MCF 10A (cell line): ENCODE measurements at regions of chr13 and their contacts with region 1.

Region 1: GRCh38 chr13:87274209-87274819 is 396.9 kb upstream of the SLITRK5 start:
- DNase-seq: peak; percentile 79
- H3K4me3 Mint-ChIP-seq: no peak overlapping the region
- H3K27ac Mint-ChIP-seq: no peak overlapping the region
- H3K4me1 Mint-ChIP-seq: no peaks in the 10 kb centered on the region
- H3K27me3 Mint-ChIP-seq: no peaks in the 10 kb centered on the region
- CTCF ChIP-seq: peak; percentile 68

Region 2: DNA sequence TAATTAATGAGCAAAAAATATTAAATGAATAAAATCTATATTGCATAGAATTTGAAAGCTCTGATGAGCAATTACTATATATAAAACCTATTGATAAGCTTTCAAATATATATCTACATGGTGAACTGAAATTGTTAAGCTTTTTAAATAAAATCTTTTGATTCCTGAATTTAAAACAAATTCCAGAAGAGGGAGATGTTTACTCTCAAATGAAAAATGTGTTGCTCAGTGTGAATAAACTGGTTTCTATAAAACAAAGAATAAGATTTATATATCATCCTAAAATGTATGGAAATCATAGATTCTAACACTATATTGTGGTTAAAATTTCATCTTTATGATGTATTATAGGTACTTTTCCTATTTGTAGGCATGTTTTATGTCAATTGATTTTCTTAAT is 1303.6 kb before region 1 on chr13:
- CTCF ChIA-PET with region 1: interaction called, 7 read pairs
- POLR2A ChIA-PET with region 1: no interaction called
- intact Hi-C with region 1: loop called (anchors 2 kb)
- DNase-seq: peak; percentile 25
- H3K4me3 Mint-ChIP-seq: no peak overlapping the region
- H3K27ac Mint-ChIP-seq: no peak overlapping the region
- H3K4me1 Mint-ChIP-seq: peaks cover 10% of the 10 kb centered on the region
- H3K27me3 Mint-ChIP-seq: no peaks in the 10 kb centered on the region
- CTCF ChIP-seq: peak; percentile 34

Region 3: DNA sequence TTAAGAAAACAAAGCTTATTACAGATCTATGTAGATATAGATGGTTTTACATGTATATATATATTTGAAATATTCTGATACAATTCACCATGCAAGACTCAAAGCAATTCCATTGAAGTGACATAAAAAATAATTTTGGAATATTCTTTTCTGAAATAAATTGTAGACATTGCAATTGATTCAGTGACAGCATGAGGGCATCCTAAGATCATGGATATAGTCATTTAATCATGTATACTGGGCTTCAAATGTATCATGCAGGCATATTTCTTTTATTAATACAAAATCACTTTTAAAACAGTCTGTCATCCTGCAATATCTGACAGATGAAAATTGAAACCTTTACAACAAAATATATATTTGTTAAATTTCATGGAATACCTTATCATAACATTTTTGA is 1188.4 kb before region 1 on chr13:
- CTCF ChIA-PET with region 1: interaction called, 5 read pairs
- POLR2A ChIA-PET with region 1: no interaction called
- intact Hi-C with region 1: loop called (anchors 1 kb)
- DNase-seq: peak; percentile 14
- H3K4me3 Mint-ChIP-seq: no peak overlapping the region
- H3K27ac Mint-ChIP-seq: no peak overlapping the region
- H3K4me1 Mint-ChIP-seq: peaks cover 6% of the 10 kb centered on the region
- H3K27me3 Mint-ChIP-seq: no peaks in the 10 kb centered on the region
- CTCF ChIP-seq: peak; percentile 22

Region 4: GRCh38 chr13:86870444-86870843 is 403.9 kb before region 1 on chr13:
- CTCF ChIA-PET with region 1: interaction called, 111 read pairs
- POLR2A ChIA-PET with region 1: interaction called, 4 read pairs
- intact Hi-C with region 1: loop called (anchors 1 kb)
- DNase-seq: peak; percentile 45
- H3K4me3 Mint-ChIP-seq: no peak overlapping the region
- H3K27ac Mint-ChIP-seq: no peak overlapping the region
- H3K4me1 Mint-ChIP-seq: no peaks in the 10 kb centered on the region
- H3K27me3 Mint-ChIP-seq: no peaks in the 10 kb centered on the region
- CTCF ChIP-seq: peak; percentile 58

Region 5: GRCh38 chr13:86974995-86975328 is 299.4 kb before region 1 on chr13:
- CTCF ChIA-PET with region 1: interaction called, 11 read pairs
- POLR2A ChIA-PET with region 1: no interaction called
- intact Hi-C with region 1: no loop called
- DNase-seq: no peak
- H3K4me3 Mint-ChIP-seq: no peak overlapping the region
- H3K27ac Mint-ChIP-seq: no peak overlapping the region
- H3K4me1 Mint-ChIP-seq: peaks cover 6% of the 10 kb centered on the region
- H3K27me3 Mint-ChIP-seq: no peaks in the 10 kb centered on the region
- CTCF ChIP-seq: no peak

Region 6: DNA sequence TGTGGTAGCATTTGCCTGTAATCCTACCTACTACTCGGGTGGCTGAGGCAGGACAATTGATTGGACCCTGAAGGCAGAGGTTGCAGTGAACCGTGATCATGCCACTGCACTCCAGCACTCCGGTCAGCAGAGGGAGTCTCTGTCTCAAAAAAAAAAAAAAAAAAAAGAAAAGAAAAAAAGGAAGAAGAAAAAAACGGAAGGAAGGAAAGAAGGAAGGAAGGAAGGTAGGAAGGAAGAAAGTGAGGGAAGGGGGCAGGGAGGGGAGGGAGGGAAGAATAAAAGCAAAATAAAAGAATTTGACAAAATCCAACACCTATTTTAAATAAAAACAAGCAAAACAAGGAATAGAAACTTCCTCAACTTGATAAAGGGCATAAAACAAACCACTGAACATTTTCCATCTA is 14.8 kb before region 1 on chr13:
- CTCF ChIA-PET with region 1: interaction called, 17 read pairs
- POLR2A ChIA-PET with region 1: no interaction called
- intact Hi-C with region 1: no loop called
- DNase-seq: peak; percentile 34
- H3K4me3 Mint-ChIP-seq: peak overlapping the region; percentile 68
- H3K27ac Mint-ChIP-seq: peak overlapping the region; percentile 74
- H3K4me1 Mint-ChIP-seq: peaks cover 6% of the 10 kb centered on the region
- H3K27me3 Mint-ChIP-seq: no peaks in the 10 kb centered on the region
- CTCF ChIP-seq: peak; percentile 47

Region 7: DNA sequence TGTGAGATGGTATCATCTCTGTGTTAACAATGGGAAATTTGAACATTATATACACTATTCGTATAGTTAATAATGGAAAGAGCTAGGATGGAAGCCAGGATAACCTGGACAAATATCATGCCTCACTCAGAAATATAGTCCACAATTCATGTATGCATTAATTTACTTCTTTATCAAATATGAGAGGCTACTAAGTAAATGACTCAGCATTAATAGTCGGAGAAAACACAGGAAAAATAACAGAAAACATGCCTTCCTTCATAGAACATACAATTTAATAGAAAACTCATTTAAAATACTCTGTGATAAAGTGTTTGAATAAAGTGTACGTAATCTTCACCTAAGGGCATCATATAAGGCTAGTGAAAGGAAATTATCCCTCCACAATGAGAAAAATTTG is 13.4 kb after region 1 on chr13:
- CTCF ChIA-PET with region 1: interaction called, 14 read pairs
- POLR2A ChIA-PET with region 1: no interaction called
- intact Hi-C with region 1: no loop called
- DNase-seq: no peak
- H3K4me3 Mint-ChIP-seq: no peak overlapping the region
- H3K27ac Mint-ChIP-seq: no peak overlapping the region
- H3K4me1 Mint-ChIP-seq: no peaks in the 10 kb centered on the region
- H3K27me3 Mint-ChIP-seq: no peaks in the 10 kb centered on the region
- CTCF ChIP-seq: no peak

Region 8: DNA sequence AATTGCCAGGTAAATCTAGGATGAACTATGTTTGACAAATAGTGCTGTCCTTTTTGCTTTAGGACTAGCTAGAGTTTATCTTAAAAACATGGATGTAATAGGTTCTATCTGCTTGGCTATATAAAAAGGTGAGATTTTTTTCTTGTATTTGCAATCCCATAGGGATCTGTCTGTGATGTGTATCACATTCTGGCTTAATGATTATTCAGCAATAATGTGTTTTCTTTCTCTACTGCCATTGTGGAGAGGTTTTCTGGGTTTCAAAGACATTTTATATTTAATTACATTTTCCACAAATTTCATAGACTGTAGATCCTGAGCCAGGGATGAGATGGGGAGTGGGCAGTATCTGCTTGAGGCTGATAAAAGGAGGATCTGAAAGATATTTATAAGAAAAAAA is 119.0 kb after region 1 on chr13:
- CTCF ChIA-PET with region 1: no interaction called
- POLR2A ChIA-PET with region 1: no interaction called
- intact Hi-C with region 1: no loop called
- DNase-seq: no peak
- H3K4me3 Mint-ChIP-seq: no peak overlapping the region
- H3K27ac Mint-ChIP-seq: no peak overlapping the region
- H3K4me1 Mint-ChIP-seq: no peaks in the 10 kb centered on the region
- H3K27me3 Mint-ChIP-seq: no peaks in the 10 kb centered on the region
- CTCF ChIP-seq: no peak

Region 9: DNA sequence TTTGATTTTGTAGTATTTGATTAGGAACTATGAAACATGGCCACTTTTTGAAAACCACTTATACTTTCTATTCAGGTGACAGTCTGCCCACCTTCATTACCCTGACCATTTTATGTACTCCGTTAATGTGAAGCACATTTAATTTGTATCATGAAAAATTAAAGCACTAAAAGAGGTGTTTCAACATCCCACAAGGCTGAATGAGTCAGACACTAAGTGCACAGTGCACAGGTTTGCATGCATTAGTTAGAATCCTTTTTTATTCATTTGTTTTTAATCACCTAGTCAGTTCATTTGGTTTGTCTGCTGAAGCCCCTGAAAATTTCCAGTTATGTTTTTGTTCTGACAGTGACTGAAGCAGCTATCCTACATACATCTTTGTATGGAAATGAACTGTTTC is 667.9 kb after region 1 on chr13:
- CTCF ChIA-PET with region 1: no interaction called
- POLR2A ChIA-PET with region 1: no interaction called
- intact Hi-C with region 1: no loop called
- DNase-seq: peak; percentile 40
- H3K4me3 Mint-ChIP-seq: no peak overlapping the region
- H3K27ac Mint-ChIP-seq: no peak overlapping the region
- H3K4me1 Mint-ChIP-seq: peaks cover 18% of the 10 kb centered on the region
- H3K27me3 Mint-ChIP-seq: no peaks in the 10 kb centered on the region
- CTCF ChIP-seq: no peak